ENCODE measurements at regions of chrX and their contacts with region 1.

Region 1: DNA sequence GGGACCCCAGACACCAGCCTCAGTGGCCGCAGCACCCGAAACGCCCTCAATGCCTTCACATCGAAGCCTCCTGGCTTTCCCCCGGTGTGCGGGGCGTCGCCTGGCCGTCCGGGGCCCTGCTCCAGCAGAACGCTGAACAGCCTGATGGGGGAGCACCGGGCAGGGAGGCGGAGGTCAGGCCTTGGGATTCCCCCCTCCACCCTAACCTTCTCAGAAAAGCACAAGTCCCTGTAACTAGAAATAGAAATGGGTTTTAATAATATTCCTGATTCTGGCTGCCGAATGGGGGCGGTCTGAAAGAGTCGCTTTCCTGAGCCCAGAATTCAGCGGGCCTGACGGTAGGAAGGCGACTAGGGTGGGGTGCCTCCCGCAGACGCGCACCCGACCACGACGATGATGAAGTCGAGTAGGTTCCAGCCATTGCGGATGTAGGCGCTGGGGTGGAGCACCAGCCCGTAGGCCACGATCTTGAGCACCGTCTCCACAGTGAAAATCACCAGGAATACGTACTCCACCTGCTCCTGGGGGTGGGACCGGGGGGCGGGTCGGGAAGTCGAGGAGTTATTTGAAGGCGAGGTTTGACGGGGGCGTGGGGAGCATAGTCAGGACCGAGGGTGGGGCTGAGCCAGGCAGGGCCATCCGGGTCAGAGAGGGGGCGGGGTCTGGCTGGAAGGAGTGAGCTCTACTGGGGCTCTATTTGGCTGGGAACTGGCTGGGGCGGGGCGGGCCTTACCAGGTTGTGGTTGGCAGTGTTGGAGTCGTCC is 2.5 kb downstream of the CACNA1F start:
- DNase-seq: peak; percentile 77
- H3K4me3 Mint-ChIP-seq: peak overlapping the region; percentile 67
- H3K27ac Mint-ChIP-seq: peak overlapping the region; percentile 74
- H3K4me1 Mint-ChIP-seq: peaks cover 10% of the 10 kb centered on the region
- H3K27me3 Mint-ChIP-seq: no peaks in the 10 kb centered on the region

Region 2: DNA sequence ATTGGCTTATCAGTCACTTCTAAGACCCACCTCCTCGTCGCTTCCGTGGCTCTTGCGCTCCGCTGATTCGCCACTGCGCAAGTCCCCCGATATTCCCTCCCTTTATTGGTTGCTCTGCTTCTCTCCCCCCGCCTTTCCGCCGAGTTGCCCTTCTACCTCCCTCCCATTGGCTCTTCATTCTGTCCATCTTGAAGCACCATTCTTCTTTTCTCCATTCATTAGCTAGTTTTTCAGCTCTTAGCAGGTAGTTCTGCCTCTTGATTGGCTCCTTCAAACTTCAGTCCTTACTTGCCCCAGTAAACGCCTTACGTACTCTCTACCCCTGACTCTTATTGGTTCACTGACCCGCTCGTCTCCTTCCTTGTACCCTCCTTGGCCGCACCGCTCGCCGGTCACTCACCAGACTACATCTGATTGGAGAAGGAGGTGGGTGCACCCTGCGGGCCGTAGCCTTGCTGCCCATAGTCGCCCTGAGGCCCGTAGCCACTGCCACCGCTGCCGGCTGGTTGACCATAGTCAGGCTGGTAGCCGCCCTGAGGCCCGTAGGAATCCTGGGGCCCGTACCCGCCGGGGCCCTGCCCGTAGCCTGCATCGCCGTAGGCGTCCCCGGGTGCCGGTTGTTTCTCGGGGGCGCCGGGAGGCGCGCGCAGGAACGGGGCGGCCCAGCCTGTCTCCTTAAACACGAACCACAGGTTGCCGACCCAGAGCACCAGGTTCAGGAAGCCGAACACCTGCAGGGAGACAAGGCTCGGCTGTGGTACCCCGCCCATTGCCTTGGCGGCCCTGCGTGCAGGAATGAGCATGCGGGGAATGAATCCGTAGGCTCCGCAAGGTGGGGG is 39.4 kb before region 1 on chrX:
- CTCF ChIA-PET with region 1: interaction called, 4 read pairs
- intact Hi-C with region 1: loop called (anchors 2 kb)
- DNase-seq: peak; percentile 89
- H3K4me3 Mint-ChIP-seq: peak overlapping the region; percentile 97
- H3K27ac Mint-ChIP-seq: peak overlapping the region; percentile 94
- H3K4me1 Mint-ChIP-seq: peaks cover 25% of the 10 kb centered on the region
- H3K27me3 Mint-ChIP-seq: no peaks in the 10 kb centered on the region

Region 3: GRCh38 chrX:49199906-49200771 is 30.5 kb before region 1 on chrX and contains the start of gene SYP:
- CTCF ChIA-PET with region 1: no interaction called
- intact Hi-C with region 1: loop called (anchors 2 kb)
- DNase-seq: peak; percentile 91
- H3K4me3 Mint-ChIP-seq: peak within 1 kb of the TSS; percentile 64
- H3K27ac Mint-ChIP-seq: peak within 1 kb of the TSS; percentile 63
- H3K4me1 Mint-ChIP-seq: peaks cover 19% of the 10 kb centered on the region
- H3K27me3 Mint-ChIP-seq: no peaks in the 10 kb centered on the region
- total RNA-seq, gene SYP: 2.5 to 2.6 TPM

Region 4: DNA sequence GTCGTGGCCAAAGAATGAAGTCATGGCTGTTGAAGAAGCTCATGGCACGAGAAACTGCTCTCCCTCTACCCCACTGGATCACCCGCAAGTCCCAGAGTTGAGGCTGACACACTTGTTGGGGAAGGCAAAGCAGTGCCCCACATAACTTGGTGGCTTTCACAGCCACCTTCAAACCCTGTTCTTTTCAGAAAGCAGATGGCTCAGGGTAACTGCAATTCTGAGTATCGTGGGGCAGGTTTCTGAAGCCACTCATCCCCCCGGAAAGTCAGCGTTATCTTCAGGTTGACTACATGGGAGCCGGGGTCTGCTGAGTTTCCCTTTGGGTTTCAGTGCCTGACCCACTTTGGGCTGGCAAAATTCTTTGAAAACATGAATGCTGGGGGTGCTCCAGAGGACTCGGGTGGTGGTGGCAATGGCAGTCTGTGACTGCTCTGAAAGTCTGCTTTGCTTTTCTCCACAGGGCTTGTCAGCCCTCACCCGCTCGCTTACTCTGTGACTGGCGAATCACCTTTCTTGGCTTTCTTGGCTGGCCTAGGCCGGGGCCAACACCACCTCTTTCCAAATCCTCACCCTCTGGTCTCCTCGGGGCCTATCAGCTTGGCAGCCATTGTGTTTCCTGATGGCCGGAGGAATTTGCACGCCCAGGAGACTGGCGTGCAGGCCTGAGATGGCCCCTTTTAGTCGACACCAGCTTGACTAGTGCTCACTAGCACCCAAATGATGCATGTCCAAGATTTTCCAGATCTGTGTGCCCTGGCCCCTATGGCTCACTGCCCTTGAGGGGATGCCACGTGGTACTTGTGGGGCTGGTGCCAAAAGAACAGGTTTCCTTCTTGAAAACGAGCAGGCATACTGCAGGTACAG is 46.3 kb after region 1 on chrX:
- CTCF ChIA-PET with region 1: no interaction called
- intact Hi-C with region 1: loop called (anchors 2 kb)
- DNase-seq: peak; percentile 64
- H3K4me3 Mint-ChIP-seq: no peak overlapping the region
- H3K27ac Mint-ChIP-seq: peak overlapping the region; percentile 94
- H3K4me1 Mint-ChIP-seq: peaks cover 86% of the 10 kb centered on the region
- H3K27me3 Mint-ChIP-seq: no peaks in the 10 kb centered on the region

Measured in activated naive CD4-positive, alpha-beta T cell treated with anti-CD3 and anti-CD28 coated beads for 36 hours (primary cell).